ENCODE measurements at regions of chr5 and their contacts with region 1.

Region 1: DNA sequence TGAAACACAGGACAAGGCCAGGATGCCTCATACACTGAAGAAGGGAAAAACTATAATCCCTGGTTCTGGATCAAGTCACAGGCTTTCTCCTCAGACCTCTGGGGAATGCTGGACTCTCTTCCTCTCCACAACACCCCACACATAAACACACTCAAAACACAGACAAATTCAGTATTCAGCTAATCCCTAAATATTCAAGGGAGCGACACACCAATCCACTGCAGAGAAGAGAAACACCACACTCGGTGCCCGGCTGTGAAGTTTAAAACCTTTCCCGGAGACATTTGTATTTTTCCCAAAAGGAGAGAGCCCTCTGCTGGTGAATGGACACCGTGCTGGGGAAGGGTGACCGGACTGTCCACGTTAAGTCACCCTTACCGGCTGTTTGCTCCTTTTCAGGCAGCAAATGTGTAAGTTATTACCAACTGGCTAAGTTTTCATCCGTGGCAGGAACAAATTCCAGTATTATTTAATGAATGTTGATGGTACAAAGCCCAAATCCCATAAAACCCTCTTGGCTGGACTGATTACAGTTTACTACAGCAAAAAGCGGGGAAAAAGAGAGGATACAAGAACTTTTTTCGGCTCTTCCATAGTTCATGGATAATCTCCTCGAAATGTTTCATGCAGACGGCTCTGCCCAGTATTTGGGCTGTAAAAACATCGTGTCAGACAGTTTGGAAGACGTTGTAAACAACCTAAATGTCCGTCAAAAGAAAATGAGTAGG is 130.9 kb upstream of the SLC30A5 start:
- DNase-seq: peak; percentile 48 to 67
- ATAC-seq: peak; percentile 89 to 98 (median 94)
- H3K4me3 ChIP-seq: no peak overlapping the region
- H3K27ac ChIP-seq: no peak overlapping the region
- H3K4me1 ChIP-seq: peaks cover 5% of the 10 kb centered on the region
- H3K27me3 ChIP-seq: no peaks in the 10 kb centered on the region
- CTCF ChIP-seq: peak; percentile 91

Region 2: DNA sequence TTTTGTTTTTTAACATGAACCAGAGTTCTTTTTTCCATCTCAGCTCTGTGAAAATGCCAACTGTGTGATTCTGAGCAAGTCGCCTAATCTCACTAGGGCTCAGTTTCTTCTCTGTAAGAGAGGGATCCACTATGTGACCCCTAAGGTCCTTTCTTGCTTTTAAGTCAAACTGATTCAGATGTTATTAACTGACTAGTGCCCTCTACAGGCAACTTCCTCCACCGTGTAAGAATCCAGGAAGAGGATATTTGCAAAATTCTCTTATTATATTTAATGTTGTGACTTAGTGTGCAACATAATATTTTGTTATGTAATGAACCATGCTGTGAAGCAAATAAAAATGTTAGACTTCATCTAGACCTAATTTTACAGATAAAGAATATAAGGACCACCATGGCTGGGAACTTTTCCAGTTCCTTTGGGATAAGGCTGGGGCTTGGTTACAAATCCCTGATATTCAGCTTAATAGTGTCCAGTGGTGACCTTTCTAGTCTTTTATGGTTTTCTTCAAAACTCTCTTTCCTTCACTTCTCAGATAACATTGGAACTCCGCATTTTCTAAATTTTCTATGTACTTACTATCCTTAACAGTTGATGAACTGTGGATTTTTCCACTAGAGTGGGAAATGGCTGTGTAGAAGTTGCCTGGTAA is 502.6 kb before region 1 on chr5:
- intact Hi-C with region 1: loop called in 1 of 2 experiments (anchors 10 kb)
- DNase-seq: no peak
- ATAC-seq: peak in 3 of 4 donors; percentile 57 to 74 (median 64)
- H3K4me3 ChIP-seq: no peak overlapping the region
- H3K27ac ChIP-seq: no peak overlapping the region
- H3K4me1 ChIP-seq: peaks cover 6% of the 10 kb centered on the region
- H3K27me3 ChIP-seq: no peaks in the 10 kb centered on the region
- CTCF ChIP-seq: peak; percentile 68

Region 3: DNA sequence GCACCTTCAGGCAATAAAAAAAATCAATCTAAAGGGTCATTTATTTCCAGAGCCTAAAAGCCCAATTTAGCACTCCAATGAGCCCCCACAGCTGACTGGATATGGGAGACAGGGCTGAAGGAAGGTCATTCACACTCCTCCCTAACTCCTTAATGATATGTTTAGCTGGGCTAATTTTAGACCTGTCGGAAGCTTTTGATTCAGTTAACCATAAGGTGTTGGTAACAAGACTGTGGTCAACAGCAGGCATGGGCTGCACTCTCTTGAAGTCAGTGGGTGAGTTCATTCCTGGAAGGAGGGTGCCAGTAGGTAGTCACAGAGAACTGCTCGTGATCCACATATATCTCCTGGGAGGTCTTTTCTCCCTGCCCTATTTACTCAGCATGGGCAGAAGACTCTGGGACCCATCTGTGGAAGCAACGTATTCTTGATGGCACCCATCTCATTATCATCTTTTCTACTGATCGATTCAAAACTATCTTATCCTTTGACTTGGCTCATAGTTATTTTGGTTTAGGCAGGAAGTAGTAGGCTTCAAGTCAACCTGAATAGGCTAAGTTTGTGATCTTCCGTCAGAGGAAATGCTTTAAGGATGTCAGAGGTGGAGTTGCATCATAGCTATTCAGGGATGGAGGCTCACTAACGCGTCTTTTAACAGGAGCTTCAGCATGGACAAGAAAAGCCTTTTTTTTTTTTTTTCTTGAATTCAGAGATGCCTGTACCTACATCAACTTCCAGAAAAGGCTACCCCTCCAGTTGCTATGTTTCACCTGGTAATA is 236.8 kb before region 1 on chr5:
- intact Hi-C with region 1: loop called in 1 of 2 experiments (anchors 5 kb)
- DNase-seq: no peak
- ATAC-seq: peak; percentile 78 to 95 (median 89)
- H3K4me3 ChIP-seq: no peak overlapping the region
- H3K27ac ChIP-seq: peak overlapping the region; percentile 85
- H3K4me1 ChIP-seq: peaks cover 32% of the 10 kb centered on the region
- H3K27me3 ChIP-seq: no peaks in the 10 kb centered on the region
- CTCF ChIP-seq: no peak

Measured in psoas muscle (tissue), 8 donors.